Activated B cell treated with CpG ODN at 0.5 μM for 24 hours (primary cell): ENCODE measurements at regions of chr12 and their contacts with region 1.

Region 1: DNA sequence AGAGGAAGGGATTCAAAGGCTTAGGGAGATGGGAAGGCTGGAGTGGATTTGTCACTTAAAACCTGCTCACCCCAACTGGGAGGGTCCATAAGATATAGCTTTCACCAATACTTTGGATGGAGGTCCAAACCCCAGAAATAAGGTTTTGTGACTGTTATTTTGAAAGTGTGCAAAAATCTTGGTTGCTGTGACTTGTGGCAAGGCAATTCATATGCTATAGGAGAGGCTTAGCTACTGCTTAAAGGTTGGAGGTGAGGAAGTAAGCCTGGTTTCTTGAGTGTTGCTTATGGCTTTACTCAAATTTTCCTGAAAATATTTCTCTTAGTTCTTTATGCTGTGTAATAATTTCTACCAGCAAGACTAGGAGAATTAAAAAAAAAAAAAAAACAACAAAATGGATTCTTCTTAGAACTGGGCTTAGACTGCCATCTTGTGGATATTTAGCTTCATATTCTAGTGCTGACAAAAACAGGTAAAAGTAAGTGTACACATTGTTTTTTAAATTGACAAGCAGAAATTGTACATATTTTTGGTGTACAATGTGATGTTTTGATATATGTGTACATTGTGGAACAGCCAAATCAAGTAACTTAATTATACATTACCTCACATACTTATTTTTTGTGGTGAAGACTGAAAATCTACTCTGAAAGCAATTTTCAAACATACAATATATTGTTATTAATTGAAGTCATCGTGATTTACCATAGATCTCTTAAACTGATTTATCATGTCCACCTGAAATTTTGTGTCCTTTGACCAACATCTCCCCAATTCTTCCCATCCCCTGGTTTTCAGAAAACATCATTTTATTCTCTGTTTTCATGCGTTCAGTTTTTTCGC is 23.0 kb downstream of the PDE6H start:
- DNase-seq: no peak
- ATAC-seq: peak; percentile 35
- H3K4me3 Mint-ChIP-seq: no peak overlapping the region
- H3K27ac Mint-ChIP-seq: peak overlapping the region; percentile 24
- H3K4me1 Mint-ChIP-seq: peaks cover 48% of the 10 kb centered on the region
- H3K27me3 Mint-ChIP-seq: peaks cover 9% of the 10 kb centered on the region
- CTCF ChIP-seq: peak; percentile 46

Region 2: DNA sequence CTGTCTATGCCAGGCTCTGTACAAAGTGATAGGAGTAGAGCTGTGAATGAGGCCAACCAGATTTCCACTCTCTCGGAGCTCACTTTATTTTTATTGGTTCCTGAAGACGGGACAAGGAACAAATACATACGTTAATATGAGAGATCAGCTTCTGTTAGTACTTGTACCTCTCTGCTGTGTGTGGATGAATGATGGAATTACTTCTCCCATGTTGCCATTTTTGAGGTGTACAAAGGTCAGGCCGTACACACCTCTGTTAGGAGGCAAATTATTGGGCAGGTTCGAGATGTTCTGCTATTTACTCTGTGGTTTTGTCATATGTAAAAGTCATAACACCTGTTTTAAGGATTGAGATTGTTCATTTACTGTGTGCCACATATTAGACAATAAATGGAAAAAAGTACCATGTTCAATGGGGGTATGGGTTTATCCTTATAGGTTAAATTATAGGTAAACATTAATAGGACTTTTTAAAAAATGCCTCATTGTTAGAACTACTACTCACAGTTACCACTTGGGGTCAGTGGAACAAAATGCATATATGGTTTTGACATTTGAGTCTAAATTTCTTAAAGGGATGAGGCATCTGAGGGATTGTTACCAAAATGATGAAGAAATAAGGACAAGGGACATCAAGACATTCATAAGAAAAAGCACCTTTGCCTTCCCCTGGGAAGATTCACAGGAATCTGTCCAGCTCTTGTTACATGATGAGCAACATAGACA is 219.4 kb before region 1 on chr12:
- CTCF ChIA-PET with region 1: interaction called, 4 read pairs
- POLR2A ChIA-PET with region 1: interaction called, 19 read pairs
- intact Hi-C with region 1: loop called (anchors 1 kb)
- DNase-seq: no peak
- ATAC-seq: no peak
- H3K4me3 Mint-ChIP-seq: no peak overlapping the region
- H3K27ac Mint-ChIP-seq: no peak overlapping the region
- H3K4me1 Mint-ChIP-seq: peaks cover 34% of the 10 kb centered on the region
- H3K27me3 Mint-ChIP-seq: no peaks in the 10 kb centered on the region
- CTCF ChIP-seq: no peak

Region 3: DNA sequence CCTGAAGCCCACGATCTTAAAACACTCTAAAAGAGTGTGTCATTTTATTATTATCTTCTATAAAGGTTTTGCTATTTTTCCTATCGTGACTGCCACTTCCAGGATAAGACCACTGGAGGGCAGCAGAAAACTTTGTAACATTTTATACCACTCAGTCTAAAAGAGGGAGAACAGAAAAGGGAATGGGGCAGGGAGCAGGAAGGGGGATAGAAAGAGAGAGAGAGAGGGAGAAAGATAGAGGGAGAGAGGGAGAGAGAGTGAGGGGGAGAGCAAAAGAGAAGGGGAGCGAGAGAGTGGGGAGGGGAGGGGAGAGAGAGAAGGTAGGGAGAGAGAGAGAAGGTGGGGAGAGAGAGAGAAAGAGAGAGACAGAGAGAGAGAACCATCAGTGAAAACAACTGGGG is 150.5 kb before region 1 on chr12:
- CTCF ChIA-PET with region 1: interaction called, 139 read pairs
- POLR2A ChIA-PET with region 1: interaction called, 4 read pairs
- intact Hi-C with region 1: loop called (anchors 1 kb)
- DNase-seq: no peak
- ATAC-seq: peak; percentile 81
- H3K4me3 Mint-ChIP-seq: no peak overlapping the region
- H3K27ac Mint-ChIP-seq: peak overlapping the region; percentile 51
- H3K4me1 Mint-ChIP-seq: peaks cover 14% of the 10 kb centered on the region
- H3K27me3 Mint-ChIP-seq: no peaks in the 10 kb centered on the region
- CTCF ChIP-seq: peak; percentile 87

Region 4: DNA sequence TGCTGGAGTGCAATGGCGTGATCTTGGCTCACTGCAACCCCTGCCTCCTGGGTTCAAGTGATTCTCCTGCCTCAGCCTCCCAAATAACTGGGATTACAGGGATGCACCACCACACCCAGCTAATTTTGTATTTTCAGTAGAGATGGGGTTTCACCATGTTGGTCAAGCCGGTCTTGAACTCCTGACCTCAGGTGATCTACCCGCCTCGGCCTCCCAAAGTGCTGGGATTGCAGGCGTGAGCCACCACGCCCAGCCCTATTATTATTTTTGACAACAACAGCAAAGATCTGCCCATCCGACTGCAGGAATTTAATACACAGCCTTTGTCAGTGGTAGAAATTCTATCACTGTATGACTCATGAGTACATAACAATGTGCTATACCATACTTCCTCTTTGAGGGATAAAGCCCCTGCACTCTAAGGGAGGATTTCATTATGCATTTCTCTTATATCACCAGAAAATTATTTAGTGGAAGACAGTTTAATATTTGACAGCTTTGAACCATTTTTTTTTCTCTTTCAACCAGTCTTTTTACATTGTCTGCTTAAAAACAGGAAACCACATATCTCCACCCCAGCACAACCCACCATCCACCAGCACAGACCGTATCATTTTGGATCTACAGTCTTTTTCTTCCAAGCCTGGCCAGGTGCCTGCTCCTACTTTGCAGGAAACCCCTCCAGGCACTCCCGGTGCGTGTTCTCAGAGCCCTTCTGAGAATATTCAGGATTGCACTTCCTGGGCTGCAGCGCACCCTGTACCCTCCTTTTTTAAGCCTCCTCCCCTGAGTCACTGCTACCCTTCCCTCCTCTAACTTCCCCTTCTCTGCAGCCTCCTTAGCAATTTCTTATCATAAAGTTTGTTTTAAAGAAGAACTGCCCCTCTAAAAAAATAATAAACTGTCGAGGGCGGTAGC is 35.0 kb before region 1 on chr12:
- CTCF ChIA-PET with region 1: interaction called, 9 read pairs
- POLR2A ChIA-PET with region 1: interaction called, 17 read pairs
- intact Hi-C with region 1: loop called (anchors 1 kb)
- DNase-seq: peak; percentile 41
- ATAC-seq: peak; percentile 59
- H3K4me3 Mint-ChIP-seq: peak overlapping the region; percentile 96
- H3K27ac Mint-ChIP-seq: peak overlapping the region; percentile 98
- H3K4me1 Mint-ChIP-seq: peaks cover 78% of the 10 kb centered on the region
- H3K27me3 Mint-ChIP-seq: no peaks in the 10 kb centered on the region
- CTCF ChIP-seq: no peak

Region 5: DNA sequence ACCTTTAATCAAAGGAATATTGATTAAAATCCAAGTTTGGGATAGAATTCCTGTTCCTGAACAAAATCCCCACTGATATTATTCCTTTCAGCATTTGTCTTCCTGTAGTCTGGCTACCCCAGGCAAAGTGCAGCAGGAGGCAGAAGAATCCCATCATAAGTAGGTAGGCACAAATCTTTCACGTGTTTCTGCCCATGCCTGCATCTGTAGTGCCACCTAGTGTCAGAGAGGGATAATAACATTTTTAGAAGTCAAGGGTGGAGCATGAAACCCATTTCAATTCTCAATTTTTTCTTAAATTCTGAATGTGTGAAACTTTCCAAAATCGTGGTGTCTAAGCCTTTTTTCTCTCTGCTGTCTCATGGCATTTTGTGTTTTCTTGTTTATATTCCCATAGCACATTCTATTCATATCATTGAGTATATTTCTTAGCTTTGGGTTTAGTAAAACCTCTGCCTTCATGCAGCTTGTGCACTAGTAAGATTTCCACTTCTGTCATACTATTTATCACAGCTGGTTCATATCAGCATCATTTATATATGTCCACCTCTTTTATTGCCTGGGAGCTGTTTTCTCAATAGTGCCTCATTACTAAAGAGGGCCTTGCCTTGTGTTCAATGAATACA is 273.2 kb after region 1 on chr12:
- CTCF ChIA-PET with region 1: no interaction called
- POLR2A ChIA-PET with region 1: no interaction called
- intact Hi-C with region 1: loop called (anchors 5 kb)
- DNase-seq: no peak
- ATAC-seq: peak; percentile 62
- H3K4me3 Mint-ChIP-seq: no peak overlapping the region
- H3K27ac Mint-ChIP-seq: no peak overlapping the region
- H3K4me1 Mint-ChIP-seq: no peaks in the 10 kb centered on the region
- H3K27me3 Mint-ChIP-seq: peaks cover 5% of the 10 kb centered on the region
- CTCF ChIP-seq: peak; percentile 76